ENCODE measurements at regions of chr15 and their contacts with region 1.

Region 1: GRCh38 chr15:59247364-59247763 is 40.7 kb downstream of the LDHAL6B start:
- DNase-seq: peak in 8 of 9 donors; percentile 8 to 50 (median 33)
- ATAC-seq: peak; percentile 79
- H3K4me3 ChIP-seq: no peak overlapping the region
- H3K4me3 Mint-ChIP-seq: no peak overlapping the region
- H3K27ac ChIP-seq: no peak overlapping the region
- H3K27ac Mint-ChIP-seq: no peak overlapping the region
- H3K4me1 ChIP-seq: no peaks in the 10 kb centered on the region
- H3K4me1 Mint-ChIP-seq: peaks cover 0 to 25% (median 0%) of the 10 kb centered on the region in 7 donors
- H3K27me3 ChIP-seq: no peaks in the 10 kb centered on the region
- H3K27me3 Mint-ChIP-seq: peaks cover 0 to 1% (median 0%) of the 10 kb centered on the region in 5 donors

Region 2: GRCh38 chr15:58980351-58980939 is 266.9 kb before region 1 on chr15:
- CTCF ChIA-PET with region 1: no interaction called
- POLR2A ChIA-PET with region 1: no interaction called
- intact Hi-C with region 1: loop called (anchors 1 to 2 kb)
- DNase-seq: peak in 6 of 9 donors; percentile 30 to 57 (median 48)
- ATAC-seq: peak; percentile 62
- H3K4me3 ChIP-seq: no peak overlapping the region
- H3K4me3 Mint-ChIP-seq: peak overlapping the region in 3 of 10 donors; percentile 55 to 74 (median 60)
- H3K27ac ChIP-seq: no peak overlapping the region
- H3K27ac Mint-ChIP-seq: peak overlapping the region in 1 of 9 donors; percentile 85
- H3K4me1 ChIP-seq: peaks cover 19 to 20% of the 10 kb centered on the region in 2 donors
- H3K4me1 Mint-ChIP-seq: peaks cover 21 to 37% (median 27%) of the 10 kb centered on the region in 7 donors
- H3K27me3 ChIP-seq: no peaks in the 10 kb centered on the region
- H3K27me3 Mint-ChIP-seq: peaks cover 0 to 18% (median 0%) of the 10 kb centered on the region in 5 donors

Region 3: GRCh38 chr15:59299929-59300617 is 52.7 kb after region 1 on chr15:
- CTCF ChIA-PET with region 1: no interaction called
- POLR2A ChIA-PET with region 1: no interaction called
- intact Hi-C with region 1: loop called in 1 of 2 experiments (anchors 2 kb)
- DNase-seq: peak; percentile 17 to 74 (median 66)
- ATAC-seq: peak; percentile 97
- H3K4me3 ChIP-seq: peak overlapping the region; percentile 36
- H3K4me3 Mint-ChIP-seq: peak overlapping the region; percentile 63 to 87 (median 73)
- H3K27ac ChIP-seq: no peak overlapping the region
- H3K27ac Mint-ChIP-seq: peak overlapping the region; percentile 8 to 85 (median 74)
- H3K4me1 ChIP-seq: peaks cover 14 to 24% of the 10 kb centered on the region in 2 donors
- H3K4me1 Mint-ChIP-seq: peaks cover 19 to 65% (median 38%) of the 10 kb centered on the region in 7 donors
- H3K27me3 ChIP-seq: no peaks in the 10 kb centered on the region
- H3K27me3 Mint-ChIP-seq: no peaks in the 10 kb centered on the region

Region 4: GRCh38 chr15:59329570-59330350 is 82.4 kb after region 1 on chr15:
- CTCF ChIA-PET with region 1: no interaction called
- POLR2A ChIA-PET with region 1: no interaction called
- intact Hi-C with region 1: no loop called
- DNase-seq: no peak
- ATAC-seq: no peak
- H3K4me3 ChIP-seq: no peak overlapping the region
- H3K4me3 Mint-ChIP-seq: no peak overlapping the region
- H3K27ac ChIP-seq: no peak overlapping the region
- H3K27ac Mint-ChIP-seq: no peak overlapping the region
- H3K4me1 ChIP-seq: no peaks in the 10 kb centered on the region
- H3K4me1 Mint-ChIP-seq: peaks cover 0 to 20% (median 0%) of the 10 kb centered on the region in 7 donors
- H3K27me3 ChIP-seq: no peaks in the 10 kb centered on the region
- H3K27me3 Mint-ChIP-seq: peaks cover 0 to 23% (median 6%) of the 10 kb centered on the region in 5 donors

Region 5: GRCh38 chr15:59372352-59373211 is 125.2 kb after region 1 on chr15 and contains the start of gene MYO1E:
- CTCF ChIA-PET with region 1: no interaction called
- POLR2A ChIA-PET with region 1: no interaction called
- intact Hi-C with region 1: loop called in 1 of 2 experiments (anchors 1 kb)
- DNase-seq: peak in 3 of 9 donors; percentile 3 to 49 (median 23)
- ATAC-seq: peak; percentile 83
- H3K4me3 ChIP-seq: peak within 1 kb of the TSS; percentile 56
- H3K4me3 Mint-ChIP-seq: peak within 1 kb of the TSS; percentile 80 to 97 (median 86)
- H3K27ac ChIP-seq: no peak within 1 kb of the TSS
- H3K27ac Mint-ChIP-seq: peak within 1 kb of the TSS in 1 of 9 donors; percentile 81
- H3K4me1 ChIP-seq: peaks cover 0 to 8% of the 10 kb centered on the region in 2 donors
- H3K4me1 Mint-ChIP-seq: peaks cover 7 to 38% (median 20%) of the 10 kb centered on the region in 7 donors
- H3K27me3 ChIP-seq: peaks cover 7 to 10% of the 10 kb centered on the region in 2 donors
- H3K27me3 Mint-ChIP-seq: peaks cover 49 to 67% (median 57%) of the 10 kb centered on the region in 5 donors
- total RNA-seq, gene MYO1E: 2.3 to 67.1 (median 3.7) TPM

Region 6: GRCh38 chr15:59410391-59410896 is 163.1 kb after region 1 on chr15:
- CTCF ChIA-PET with region 1: no interaction called
- POLR2A ChIA-PET with region 1: no interaction called
- intact Hi-C with region 1: loop called in 1 of 2 experiments (anchors 10 kb)
- DNase-seq: no peak
- ATAC-seq: no peak
- H3K4me3 ChIP-seq: no peak overlapping the region
- H3K4me3 Mint-ChIP-seq: no peak overlapping the region
- H3K27ac ChIP-seq: no peak overlapping the region
- H3K27ac Mint-ChIP-seq: peak overlapping the region in 2 of 9 donors; percentile 9 to 62
- H3K4me1 ChIP-seq: peaks cover 0 to 9% of the 10 kb centered on the region in 2 donors
- H3K4me1 Mint-ChIP-seq: peaks cover 6 to 47% (median 24%) of the 10 kb centered on the region in 7 donors
- H3K27me3 ChIP-seq: no peaks in the 10 kb centered on the region
- H3K27me3 Mint-ChIP-seq: peaks cover 0 to 33% (median 8%) of the 10 kb centered on the region in 5 donors